ENCODE measurements at regions of chr5 and their contacts with region 1.

Region 1: DNA sequence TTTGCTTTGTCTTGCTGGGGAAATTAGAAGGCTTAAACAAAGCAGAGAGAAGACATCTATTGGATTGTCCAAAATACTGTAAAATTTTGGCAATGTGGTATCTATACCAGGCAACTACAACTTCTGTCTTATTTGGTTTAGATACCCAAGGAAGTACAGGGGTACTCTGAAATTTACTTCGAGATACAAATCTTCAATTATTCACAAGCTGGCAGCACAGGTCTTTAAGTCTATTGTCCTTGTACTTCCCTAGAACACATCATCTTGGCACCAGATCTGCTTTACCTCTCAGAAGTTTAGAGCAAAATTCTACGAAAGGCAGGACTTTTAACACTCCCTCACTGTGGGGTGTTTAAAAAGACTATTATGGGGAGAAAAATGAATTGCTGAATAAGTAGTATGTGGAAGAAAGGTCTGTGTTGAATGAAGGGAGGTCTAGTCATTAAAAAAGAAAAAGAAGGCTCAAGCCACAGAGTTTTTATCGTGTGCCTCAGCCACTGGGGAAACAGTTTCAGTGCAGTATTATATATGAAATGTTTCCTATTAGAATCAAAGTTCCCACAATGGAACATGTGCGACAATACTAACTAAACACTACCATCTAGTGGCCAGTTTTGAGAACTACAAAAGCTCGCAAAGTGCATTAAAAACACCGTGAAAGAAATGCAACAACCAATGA is 93.7 kb downstream of the PDE4D start:
- DNase-seq: peak in 1 of 5 donors; percentile 15
- ATAC-seq: peak in 3 of 4 donors; percentile 58 to 82 (median 78)
- H3K4me3 ChIP-seq: peak overlapping the region in 5 of 12 donors; percentile 2 to 40 (median 7)
- H3K27ac ChIP-seq: peak overlapping the region in 7 of 12 donors; percentile 3 to 63 (median 22)
- H3K4me1 ChIP-seq: peaks cover 0 to 17% (median 10%) of the 10 kb centered on the region in 12 donors
- H3K27me3 ChIP-seq: no peaks in the 10 kb centered on the region
- CTCF ChIP-seq: peak; percentile 70 to 88 (median 82)
- POLR2A ChIP-seq: no peak

Region 2: DNA sequence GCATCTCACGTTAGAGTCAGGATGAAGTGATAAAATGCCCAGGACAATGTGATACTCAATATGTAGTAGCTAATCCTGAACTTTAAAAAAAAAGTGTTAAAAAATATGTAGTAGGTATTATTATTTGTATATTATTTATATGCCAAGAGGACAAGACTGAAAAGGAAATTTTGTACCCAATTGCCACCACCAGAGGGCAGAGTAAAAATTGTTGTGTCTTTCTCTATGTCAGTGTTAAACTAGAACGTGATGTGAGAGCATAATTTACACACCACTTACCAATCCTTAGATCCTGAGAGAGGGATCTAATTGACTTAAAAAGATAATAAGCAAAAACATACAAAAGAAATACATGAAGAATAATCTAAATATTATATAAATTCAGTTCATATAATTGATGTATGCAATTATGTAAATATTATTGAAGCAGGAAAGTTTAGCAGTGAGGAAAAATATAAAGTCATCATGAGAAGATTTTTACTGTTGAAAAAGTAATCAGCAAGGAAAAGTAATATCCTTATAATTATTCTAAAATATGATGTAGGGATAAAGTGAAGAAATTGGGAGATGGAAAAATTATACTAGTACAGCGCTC is 928.1 kb before region 1 on chr5:
- intact Hi-C with region 1: loop called in 1 of 10 experiments (anchors 10 kb)
- DNase-seq: no peak
- ATAC-seq: peak in 2 of 4 donors; percentile 24
- H3K4me3 ChIP-seq: no peak overlapping the region
- H3K27ac ChIP-seq: no peak overlapping the region
- H3K4me1 ChIP-seq: no peaks in the 10 kb centered on the region
- H3K27me3 ChIP-seq: no peaks in the 10 kb centered on the region
- CTCF ChIP-seq: peak; percentile 32 to 72 (median 58)
- POLR2A ChIP-seq: no peak

Region 3: DNA sequence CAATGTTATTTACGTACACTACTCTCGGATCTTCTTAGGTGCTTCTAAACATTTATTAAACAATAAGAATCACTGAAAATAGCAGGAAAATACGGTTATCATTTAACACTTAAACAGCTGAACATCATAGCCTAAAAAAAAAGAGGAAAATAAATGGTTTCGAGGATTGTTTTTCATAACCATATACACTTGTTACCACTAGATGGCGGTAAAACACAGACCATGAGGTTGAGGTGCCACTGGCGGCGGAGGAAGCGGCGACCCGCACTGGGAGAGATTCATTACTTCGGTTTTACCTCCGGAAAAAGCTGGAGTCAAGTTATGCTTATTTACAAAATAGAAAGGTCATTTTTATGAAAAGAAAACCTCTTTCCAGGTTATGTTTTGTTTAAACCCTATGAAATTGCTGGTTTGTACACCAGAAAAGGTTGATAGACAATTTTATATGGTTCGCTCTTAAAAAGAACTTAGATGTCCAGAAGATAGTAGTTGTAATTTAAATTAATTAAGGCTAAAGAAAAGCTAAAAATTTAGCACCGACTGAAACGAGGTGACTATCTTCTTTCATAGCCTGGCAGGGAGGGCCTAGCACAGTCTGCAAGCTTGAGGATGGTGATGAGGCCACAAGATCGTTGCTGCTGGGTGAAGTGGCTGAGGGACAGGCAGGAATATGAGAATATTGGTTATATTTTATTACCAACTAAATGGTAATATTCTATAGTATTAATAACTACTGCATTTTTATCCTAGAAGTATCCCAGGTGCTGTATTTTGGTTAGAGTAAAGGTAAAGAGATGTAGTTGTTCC is 611.2 kb before region 1 on chr5:
- intact Hi-C with region 1: loop called in 7 of 10 experiments (anchors 5 to 10 kb)
- DNase-seq: peak; percentile 62 to 80 (median 73)
- ATAC-seq: peak; percentile 58 to 83 (median 80)
- H3K4me3 ChIP-seq: peak overlapping the region in 10 of 12 donors; percentile 2 to 51 (median 34)
- H3K27ac ChIP-seq: peak overlapping the region in 6 of 12 donors; percentile 14 to 76 (median 20)
- H3K4me1 ChIP-seq: peaks cover 0 to 29% (median 0%) of the 10 kb centered on the region in 12 donors
- H3K27me3 ChIP-seq: no peaks in the 10 kb centered on the region
- CTCF ChIP-seq: peak; percentile 77 to 92 (median 83)
- POLR2A ChIP-seq: no peak

Region 4: DNA sequence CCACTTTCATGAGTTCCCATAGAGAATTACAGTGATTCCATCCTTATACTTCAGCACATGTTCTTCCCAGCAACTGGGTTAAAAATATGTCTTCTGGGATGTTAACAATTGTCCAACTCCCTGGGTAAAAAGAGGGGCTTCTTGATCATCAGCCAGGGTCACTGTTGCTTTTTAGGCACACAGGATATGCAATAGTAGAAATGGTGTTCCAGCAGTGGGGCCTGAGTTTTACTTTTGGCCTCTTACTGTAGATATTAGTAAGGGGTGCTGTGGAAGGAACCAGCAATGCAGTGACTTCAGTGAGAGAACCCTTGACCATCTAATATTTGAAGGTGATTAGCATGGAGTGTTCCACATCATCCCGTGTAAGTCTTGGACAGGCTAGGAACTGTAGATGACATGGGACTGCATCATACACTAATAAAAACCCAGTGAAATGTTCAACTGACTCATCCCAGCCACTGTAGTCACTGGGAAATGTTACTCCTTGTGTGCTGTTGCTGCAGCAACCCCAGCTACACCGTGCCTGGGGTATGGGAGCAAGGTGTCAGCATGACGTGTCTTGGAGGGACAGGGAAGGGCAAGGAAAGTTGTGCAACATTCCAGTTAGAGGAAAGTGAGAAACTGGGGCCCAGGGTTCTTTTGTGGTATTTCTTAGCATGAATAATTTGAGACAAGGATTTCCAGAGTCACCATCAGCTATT is 606.0 kb before region 1 on chr5:
- intact Hi-C with region 1: loop called in 7 of 10 experiments (anchors 5 to 10 kb)
- DNase-seq: peak in 2 of 5 donors; percentile 33 to 86
- ATAC-seq: peak; percentile 70 to 98 (median 90)
- H3K4me3 ChIP-seq: no peak overlapping the region
- H3K27ac ChIP-seq: peak overlapping the region in 3 of 12 donors; percentile 38 to 53 (median 44)
- H3K4me1 ChIP-seq: peaks cover 0 to 13% (median 0%) of the 10 kb centered on the region in 12 donors
- H3K27me3 ChIP-seq: no peaks in the 10 kb centered on the region
- CTCF ChIP-seq: no peak
- POLR2A ChIP-seq: no peak

Region 5: GRCh38 chr5:59390074-59390659 is 409.6 kb before region 1 on chr5:
- intact Hi-C with region 1: loop called (anchors 2 to 5 kb)
- DNase-seq: peak in 1 of 5 donors; percentile 8
- ATAC-seq: no peak
- H3K4me3 ChIP-seq: no peak overlapping the region
- H3K27ac ChIP-seq: no peak overlapping the region
- H3K4me1 ChIP-seq: no peaks in the 10 kb centered on the region
- H3K27me3 ChIP-seq: no peaks in the 10 kb centered on the region
- CTCF ChIP-seq: peak; percentile 58 to 88 (median 74)
- POLR2A ChIP-seq: no peak

Region 6: GRCh38 chr5:59506285-59506877 is 293.4 kb before region 1 on chr5:
- intact Hi-C with region 1: loop called (anchors 2 to 10 kb)
- DNase-seq: no peak
- ATAC-seq: no peak
- H3K4me3 ChIP-seq: no peak overlapping the region
- H3K27ac ChIP-seq: no peak overlapping the region
- H3K4me1 ChIP-seq: no peaks in the 10 kb centered on the region
- H3K27me3 ChIP-seq: no peaks in the 10 kb centered on the region
- CTCF ChIP-seq: peak; percentile 40 to 74 (median 48)
- POLR2A ChIP-seq: no peak

Region 7: GRCh38 chr5:59673438-59674058 is 126.3 kb before region 1 on chr5:
- intact Hi-C with region 1: loop called in 9 of 10 experiments (anchors 5 to 10 kb)
- DNase-seq: no peak
- ATAC-seq: no peak
- H3K4me3 ChIP-seq: no peak overlapping the region
- H3K27ac ChIP-seq: no peak overlapping the region
- H3K4me1 ChIP-seq: no peaks in the 10 kb centered on the region
- H3K27me3 ChIP-seq: no peaks in the 10 kb centered on the region
- CTCF ChIP-seq: peak; percentile 76 to 92 (median 86)
- POLR2A ChIP-seq: no peak

Measured in heart left ventricle (tissue), 16 donors.